IMR-90 (cell line): ENCODE measurements at regions of chr1 and their contacts with region 1.

Region 1: DNA sequence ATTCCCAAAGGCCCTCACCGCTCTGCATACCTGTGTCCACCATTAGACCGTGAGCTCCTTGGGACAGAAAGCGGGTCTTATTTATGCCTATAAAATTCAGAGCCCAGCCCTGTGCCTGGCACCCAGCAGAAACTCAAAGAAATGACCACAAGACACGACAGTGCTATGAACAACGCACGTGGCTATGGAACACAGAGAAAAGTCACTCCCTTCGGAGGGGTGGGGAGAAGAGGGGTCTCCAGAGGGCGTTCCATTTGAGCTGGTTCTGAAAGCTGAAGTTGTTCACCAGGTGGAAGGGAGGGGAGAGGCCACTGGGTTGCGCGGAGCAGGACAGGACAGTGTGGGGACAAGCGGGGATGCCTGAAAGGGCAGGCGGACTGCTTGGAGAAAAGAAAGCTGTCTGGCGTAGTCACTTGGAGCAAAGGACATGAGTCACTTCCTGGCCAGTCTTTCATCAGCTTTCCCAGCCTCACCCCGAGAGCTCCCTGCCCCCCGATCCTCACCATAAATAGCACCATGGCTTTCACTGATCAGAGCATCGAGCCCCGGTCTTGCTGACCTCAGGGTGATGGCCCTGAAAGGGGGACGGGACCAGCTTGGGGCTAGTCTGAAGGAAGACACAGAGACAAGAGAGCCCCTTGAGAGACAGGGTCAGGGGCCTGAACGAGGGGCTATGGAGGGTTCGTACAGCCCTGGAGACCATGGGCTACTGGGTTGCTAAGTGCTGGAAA is 28.5 kb downstream of the ECE1 start:
- DNase-seq: peak; percentile 96
- ATAC-seq: peak; percentile 76
- H3K4me3 ChIP-seq: no peak overlapping the region
- H3K27ac ChIP-seq: peak overlapping the region; percentile 94
- H3K4me1 ChIP-seq: peaks cover 47% of the 10 kb centered on the region
- H3K27me3 ChIP-seq: no peaks in the 10 kb centered on the region
- CTCF ChIP-seq: no peak
- POLR2A ChIP-seq: peak; percentile 79
- RAD21 ChIP-seq: no peak

Region 2: DNA sequence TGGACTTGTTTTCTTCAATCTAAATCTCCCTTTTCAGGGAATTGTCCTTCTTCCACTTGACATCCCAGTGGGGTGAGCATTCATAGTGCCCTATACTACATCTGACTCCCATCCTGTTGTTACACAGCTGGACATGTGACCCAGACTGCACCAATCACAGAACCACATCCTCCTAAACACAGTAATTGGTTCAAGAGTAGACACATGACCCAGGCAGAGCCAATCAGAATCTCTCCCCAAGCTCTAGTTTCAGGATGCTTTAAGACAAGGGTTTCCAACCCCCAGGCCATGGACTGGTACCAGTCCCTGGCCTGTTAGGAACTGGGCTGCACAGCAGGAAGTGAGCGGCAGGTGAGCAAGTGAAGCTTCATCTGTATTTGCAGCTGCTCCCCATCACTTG is 594.9 kb before region 1 on chr1:
- CTCF ChIA-PET with region 1: no interaction called
- POLR2A ChIA-PET with region 1: no interaction called
- dilution Hi-C with region 1: no loop called
- in situ Hi-C with region 1: no loop called
- intact Hi-C with region 1: no loop called
- DNase-seq: peak; percentile 11
- ATAC-seq: no peak; the same call in 1 of the 2 replicates
- H3K4me3 ChIP-seq: no peak overlapping the region
- H3K27ac ChIP-seq: no peak overlapping the region
- H3K4me1 ChIP-seq: peaks cover 4% of the 10 kb centered on the region
- H3K27me3 ChIP-seq: no peaks in the 10 kb centered on the region
- CTCF ChIP-seq: no peak
- POLR2A ChIP-seq: no peak
- RAD21 ChIP-seq: no peak

Region 3: GRCh38 chr1:21573971-21574465 is 312.3 kb after region 1 on chr1:
- CTCF ChIA-PET with region 1: no interaction called
- POLR2A ChIA-PET with region 1: no interaction called
- dilution Hi-C with region 1: no loop called
- in situ Hi-C with region 1: no loop called
- intact Hi-C with region 1: loop called (anchors 10 kb)
- DNase-seq: peak; percentile 75
- ATAC-seq: peak; percentile 89
- H3K4me3 ChIP-seq: no peak overlapping the region
- H3K27ac ChIP-seq: no peak overlapping the region
- H3K4me1 ChIP-seq: no peaks in the 10 kb centered on the region
- H3K27me3 ChIP-seq: no peaks in the 10 kb centered on the region; the same call in 1 of the 2 replicates
- CTCF ChIP-seq: peak; percentile 76
- POLR2A ChIP-seq: no peak
- RAD21 ChIP-seq: peak; percentile 83